ENCODE measurements at regions of chr17 and their contacts with region 1.

Region 1: GRCh38 chr17:28908640-28909167 is 5.8 kb upstream of the DHRS13 start:
- DNase-seq: peak; percentile 68
- H3K4me3 ChIP-seq: no peak overlapping the region
- H3K27ac ChIP-seq: peak overlapping the region; percentile 84
- H3K27me3 ChIP-seq: no peaks in the 10 kb centered on the region
- CTCF ChIP-seq: no peak

Region 2: DNA sequence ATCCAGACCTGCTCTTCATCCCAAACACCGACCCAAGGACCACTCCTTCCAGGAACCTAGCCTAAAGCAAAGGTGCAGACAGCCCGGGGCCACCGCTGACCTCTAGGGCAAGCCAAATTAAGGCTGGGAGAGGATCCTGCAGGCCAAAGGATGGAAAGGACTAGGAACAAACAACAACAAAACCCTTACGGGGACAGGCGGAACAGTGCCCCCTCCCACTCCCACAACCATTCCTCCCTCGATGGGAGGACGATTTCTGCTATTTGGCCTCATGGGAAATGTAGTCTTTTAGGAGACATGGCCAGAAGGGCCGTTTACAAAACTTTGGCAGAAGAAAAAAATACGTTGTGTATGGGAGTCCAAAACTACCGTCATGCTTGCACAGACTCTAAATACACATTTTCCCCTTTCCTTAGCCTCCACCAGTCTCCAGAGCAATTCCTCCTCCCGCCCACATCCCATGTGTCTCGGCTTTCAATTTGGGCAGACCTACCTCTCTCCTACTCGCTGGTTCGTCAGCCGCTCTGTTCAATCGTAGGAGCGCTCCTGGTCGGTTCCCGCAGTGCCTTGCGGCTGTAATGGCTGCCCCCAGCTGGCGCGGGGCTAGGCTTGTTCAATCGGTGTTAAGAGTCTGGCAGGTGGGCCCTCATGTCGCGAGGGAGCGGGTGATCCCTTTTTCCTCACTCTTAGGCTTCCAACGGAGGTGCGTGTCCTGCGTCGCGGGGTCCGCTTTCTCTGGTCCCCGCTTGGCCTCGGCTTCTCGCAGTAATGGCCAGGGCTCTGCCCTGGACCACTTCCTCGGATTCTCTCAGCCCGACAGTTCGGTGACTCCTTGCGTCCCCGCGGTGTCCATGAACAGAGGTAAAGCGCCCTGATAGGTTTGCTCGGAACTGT is 54.0 kb before region 1 on chr17 and contains the start of gene ERAL1:
- CTCF ChIA-PET with region 1: no interaction called
- POLR2A ChIA-PET with region 1: no interaction called
- DNase-seq: peak; percentile 75
- H3K4me3 ChIP-seq: peak within 1 kb of the TSS; percentile 92
- H3K27ac ChIP-seq: peak within 1 kb of the TSS; percentile 52
- H3K27me3 ChIP-seq: no peaks in the 10 kb centered on the region
- CTCF ChIP-seq: peak; percentile 18; the same call in 1 of the 2 replicates
- polyA plus RNA-seq, gene ERAL1: 45.7 and 54.4 TPM in 2 replicates

Region 3: GRCh38 chr17:28951991-28952975 is 43.6 kb after region 1 on chr17:
- CTCF ChIA-PET with region 1: interaction called, 6 read pairs
- POLR2A ChIA-PET with region 1: interaction called, 18 read pairs
- DNase-seq: peak; percentile 99
- H3K4me3 ChIP-seq: peak overlapping the region; percentile 77
- H3K27ac ChIP-seq: peak overlapping the region; percentile 98
- H3K27me3 ChIP-seq: no peaks in the 10 kb centered on the region
- CTCF ChIP-seq: no peak

Measured in AG04450 (cell line).